CD8-positive, alpha-beta T cell (primary cell): ENCODE measurements at regions of chr1 and their contacts with region 1.

Region 1: DNA sequence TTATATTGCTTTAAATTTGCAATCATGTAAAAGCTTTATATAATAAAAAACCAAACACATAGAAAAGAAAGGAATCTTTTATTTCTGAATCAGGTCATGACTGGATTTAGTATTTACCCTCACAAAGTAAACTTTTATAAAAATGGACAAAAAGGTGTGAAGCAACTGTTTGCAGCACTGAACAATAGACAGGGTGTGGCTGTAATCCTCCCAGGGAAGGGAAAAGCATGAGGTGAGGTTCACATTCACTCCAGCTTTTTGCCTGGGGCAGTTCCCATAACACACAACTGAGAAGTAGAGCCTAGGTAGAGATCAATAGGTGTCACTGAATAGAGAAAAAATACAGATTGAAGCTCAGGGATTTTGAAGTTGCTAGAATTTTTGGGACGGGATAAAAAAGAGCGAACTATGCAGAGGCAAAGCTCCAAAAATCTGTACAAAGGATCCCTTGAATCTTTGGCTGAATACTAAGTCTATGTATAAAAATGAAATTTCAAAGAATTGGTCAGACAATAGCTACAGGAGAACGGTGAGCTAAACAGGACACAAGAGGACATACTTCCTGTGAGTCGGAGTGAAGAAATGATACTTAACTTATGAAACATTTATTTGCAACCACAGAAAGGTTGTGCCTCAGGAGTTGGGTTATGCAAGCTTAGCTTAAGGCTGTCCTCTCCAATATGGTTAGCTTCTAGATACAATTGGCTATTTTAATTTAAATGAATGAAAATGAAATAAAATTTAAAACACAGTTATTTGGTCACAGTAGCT is 162.0 kb upstream of the ZP4 start:
- DNase-seq: no peak
- ATAC-seq: no peak
- H3K4me3 ChIP-seq: no peak overlapping the region
- H3K4me3 Mint-ChIP-seq: no peak overlapping the region
- H3K27ac ChIP-seq: no peak overlapping the region
- H3K27ac Mint-ChIP-seq: no peak overlapping the region
- H3K4me1 ChIP-seq: no peaks in the 10 kb centered on the region
- H3K4me1 Mint-ChIP-seq: no peaks in the 10 kb centered on the region
- H3K27me3 ChIP-seq: no peaks in the 10 kb centered on the region
- H3K27me3 Mint-ChIP-seq: no peaks in the 10 kb centered on the region
- CTCF ChIP-seq: no peak

Region 2: GRCh38 chr1:238088560-238089290 is 36.0 kb after region 1 on chr1:
- CTCF ChIA-PET with region 1: no interaction called
- POLR2A ChIA-PET with region 1: no interaction called
- intact Hi-C with region 1: loop called in 1 of 2 experiments (anchors 1 kb)
- DNase-seq: no peak
- ATAC-seq: no peak
- H3K4me3 ChIP-seq: no peak overlapping the region
- H3K4me3 Mint-ChIP-seq: no peak overlapping the region
- H3K27ac ChIP-seq: no peak overlapping the region
- H3K27ac Mint-ChIP-seq: no peak overlapping the region
- H3K4me1 ChIP-seq: no peaks in the 10 kb centered on the region
- H3K4me1 Mint-ChIP-seq: no peaks in the 10 kb centered on the region
- H3K27me3 ChIP-seq: no peaks in the 10 kb centered on the region
- H3K27me3 Mint-ChIP-seq: no peaks in the 10 kb centered on the region
- CTCF ChIP-seq: no peak